ENCODE measurements at regions of chr7 and their contacts with region 1.

Region 1: GRCh38 chr7:96321658-96322372 is at the start of gene SLC25A13:
- DNase-seq: peak; percentile 63
- H3K4me3 Mint-ChIP-seq: peak within 1 kb of the TSS; percentile 92
- H3K27ac Mint-ChIP-seq: peak within 1 kb of the TSS; percentile 98
- H3K4me1 Mint-ChIP-seq: peaks cover 35% of the 10 kb centered on the region
- H3K27me3 Mint-ChIP-seq: no peaks in the 10 kb centered on the region
- total RNA-seq, gene SLC25A13: 28.8 and 35.4 TPM in 2 replicates

Region 2: DNA sequence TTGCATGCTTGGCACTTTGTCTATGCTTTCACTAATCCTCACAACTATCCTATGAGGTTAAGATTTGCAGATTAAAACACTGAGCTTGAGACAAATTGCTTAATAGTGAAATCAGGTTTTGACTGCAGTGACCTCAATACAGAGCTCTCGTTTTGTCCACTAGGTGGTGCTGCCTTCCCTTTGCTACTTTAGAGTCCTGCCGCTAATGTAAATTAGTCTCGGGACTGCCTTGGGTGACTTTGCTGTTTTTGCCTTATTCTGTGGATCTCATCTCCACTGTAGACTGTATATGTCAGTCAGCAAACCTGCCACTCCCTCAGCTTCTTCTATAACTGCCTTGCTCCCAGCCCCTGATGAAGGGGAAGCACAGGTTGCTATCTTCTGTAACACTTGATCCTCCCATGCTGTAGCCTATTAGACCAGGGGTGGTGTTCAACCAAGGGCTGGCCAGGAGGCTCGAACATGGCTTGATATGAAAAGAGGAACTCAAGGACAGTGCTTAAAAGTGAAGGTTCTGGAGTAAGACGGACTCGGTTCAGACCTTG is 810.0 kb before region 1 on chr7:
- intact Hi-C with region 1: loop called (anchors 2 kb)
- DNase-seq: peak; percentile 32
- H3K4me3 Mint-ChIP-seq: no peak overlapping the region
- H3K27ac Mint-ChIP-seq: no peak overlapping the region
- H3K4me1 Mint-ChIP-seq: peaks cover 4% of the 10 kb centered on the region
- H3K27me3 Mint-ChIP-seq: peaks cover 26% of the 10 kb centered on the region

Region 3: GRCh38 chr7:96233084-96233483 is 88.7 kb before region 1 on chr7:
- intact Hi-C with region 1: loop called (anchors 5 kb)
- DNase-seq: no peak
- H3K4me3 Mint-ChIP-seq: no peak overlapping the region
- H3K27ac Mint-ChIP-seq: no peak overlapping the region
- H3K4me1 Mint-ChIP-seq: peaks cover 14% of the 10 kb centered on the region
- H3K27me3 Mint-ChIP-seq: no peaks in the 10 kb centered on the region

Region 4: DNA sequence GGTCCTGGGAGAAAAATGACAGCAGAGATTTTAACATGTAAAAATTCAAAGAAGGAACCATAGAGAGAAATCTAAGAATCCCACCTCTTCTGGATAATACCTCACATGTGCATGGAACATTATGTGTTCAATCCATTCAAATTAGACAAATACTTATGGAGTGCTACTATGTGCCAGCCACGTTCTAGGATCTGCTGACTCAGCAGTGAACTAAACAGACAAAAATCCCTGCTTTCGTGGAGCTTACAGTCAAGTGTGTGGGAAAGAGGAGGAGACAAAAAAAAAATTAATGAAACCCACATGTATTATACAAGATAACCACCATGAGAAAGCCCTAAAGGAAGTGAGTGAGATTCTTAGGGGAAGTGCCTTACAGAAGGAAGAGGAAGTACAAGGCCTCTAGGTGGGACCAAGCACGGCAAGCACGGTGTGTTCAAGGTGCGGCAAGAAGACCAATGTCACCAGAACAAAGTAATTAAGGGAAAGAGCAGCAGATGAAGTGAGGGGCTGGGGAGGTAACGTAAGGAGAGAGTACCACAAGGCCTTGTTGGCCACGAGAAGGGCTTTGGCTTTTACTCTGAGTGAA is 70.9 kb before region 1 on chr7:
- intact Hi-C with region 1: no loop called
- DNase-seq: no peak
- H3K4me3 Mint-ChIP-seq: no peak overlapping the region
- H3K27ac Mint-ChIP-seq: no peak overlapping the region
- H3K4me1 Mint-ChIP-seq: peaks cover 3% of the 10 kb centered on the region
- H3K27me3 Mint-ChIP-seq: no peaks in the 10 kb centered on the region

Region 5: GRCh38 chr7:96303686-96304443 is 17.9 kb before region 1 on chr7:
- intact Hi-C with region 1: loop called (anchors 1 kb)
- DNase-seq: no peak
- H3K4me3 Mint-ChIP-seq: peak overlapping the region; percentile 37
- H3K27ac Mint-ChIP-seq: peak overlapping the region; percentile 92
- H3K4me1 Mint-ChIP-seq: peaks cover 66% of the 10 kb centered on the region
- H3K27me3 Mint-ChIP-seq: no peaks in the 10 kb centered on the region

Region 6: DNA sequence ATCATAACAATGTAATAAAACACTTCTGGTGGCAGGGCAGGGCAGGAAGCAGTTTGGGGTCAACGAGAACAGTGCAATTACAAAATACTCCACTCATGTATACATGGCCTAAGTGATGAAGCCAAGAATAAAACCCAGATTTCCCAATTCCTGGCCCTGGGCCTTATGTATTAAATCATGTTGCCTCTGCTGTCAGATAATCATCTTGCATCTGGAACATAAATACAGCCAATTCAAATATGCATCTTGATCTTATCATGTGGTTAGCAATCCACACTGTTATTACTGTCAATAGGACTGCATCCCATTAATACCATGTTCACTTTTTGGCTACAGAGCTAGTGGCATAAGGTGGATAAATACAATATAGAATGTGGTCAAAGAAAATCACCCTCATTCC is 186.6 kb after region 1 on chr7:
- intact Hi-C with region 1: no loop called
- DNase-seq: no peak
- H3K4me3 Mint-ChIP-seq: no peak overlapping the region
- H3K27ac Mint-ChIP-seq: no peak overlapping the region
- H3K4me1 Mint-ChIP-seq: no peaks in the 10 kb centered on the region
- H3K27me3 Mint-ChIP-seq: peaks cover 38% of the 10 kb centered on the region

Region 7: GRCh38 chr7:96837593-96837992 is 515.8 kb after region 1 on chr7:
- intact Hi-C with region 1: loop called (anchors 5 kb)
- DNase-seq: peak; percentile 24
- H3K4me3 Mint-ChIP-seq: peak overlapping the region; percentile 47
- H3K27ac Mint-ChIP-seq: peak overlapping the region; percentile 56
- H3K4me1 Mint-ChIP-seq: peaks cover 27% of the 10 kb centered on the region
- H3K27me3 Mint-ChIP-seq: peaks cover 58% of the 10 kb centered on the region